ENCODE measurements at regions of chr22 and their contacts with region 1.

Region 1: DNA sequence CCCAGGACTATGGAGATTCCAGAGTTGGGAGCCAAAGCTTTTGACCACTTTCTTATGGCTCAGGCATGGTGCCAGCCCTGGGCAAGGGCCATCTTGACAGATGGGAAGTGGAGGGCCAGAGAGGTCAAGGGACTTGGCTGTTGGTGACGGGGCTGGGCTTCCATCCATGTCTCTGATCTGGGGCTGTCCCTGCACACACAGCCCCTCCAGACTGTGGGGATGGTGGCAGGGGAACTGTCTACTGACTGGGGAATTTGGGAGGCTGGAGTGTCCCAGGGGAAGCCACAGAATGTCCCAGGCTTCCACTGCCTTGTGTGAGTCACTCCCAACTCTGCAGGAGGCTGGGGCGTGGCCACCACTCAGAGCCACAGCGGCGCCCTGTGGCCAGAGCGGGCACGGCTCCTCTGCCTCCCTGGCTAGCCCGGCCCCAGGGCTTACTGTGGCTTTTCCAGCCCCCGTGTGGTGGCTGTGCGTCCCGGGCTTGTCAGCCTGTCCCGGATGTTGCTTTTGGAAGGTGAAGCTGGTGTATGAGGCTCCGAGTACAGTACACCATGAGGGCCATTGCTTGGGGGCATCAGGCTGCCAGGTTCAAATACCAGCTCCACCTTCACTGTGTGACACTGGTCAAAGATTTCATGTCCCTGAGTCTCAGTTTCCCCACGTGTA is 19.6 kb downstream of the C22orf23 start:
- DNase-seq: peak; percentile 91 to 96
- H3K4me3 ChIP-seq: no peak overlapping the region
- H3K27ac ChIP-seq: peak overlapping the region; percentile 69 to 81
- H3K4me1 ChIP-seq: peaks cover 5 to 32% (median 24%) of the 10 kb centered on the region in 4 donors
- H3K27me3 ChIP-seq: no peaks in the 10 kb centered on the region
- CTCF ChIP-seq: peak; percentile 99

Region 2: DNA sequence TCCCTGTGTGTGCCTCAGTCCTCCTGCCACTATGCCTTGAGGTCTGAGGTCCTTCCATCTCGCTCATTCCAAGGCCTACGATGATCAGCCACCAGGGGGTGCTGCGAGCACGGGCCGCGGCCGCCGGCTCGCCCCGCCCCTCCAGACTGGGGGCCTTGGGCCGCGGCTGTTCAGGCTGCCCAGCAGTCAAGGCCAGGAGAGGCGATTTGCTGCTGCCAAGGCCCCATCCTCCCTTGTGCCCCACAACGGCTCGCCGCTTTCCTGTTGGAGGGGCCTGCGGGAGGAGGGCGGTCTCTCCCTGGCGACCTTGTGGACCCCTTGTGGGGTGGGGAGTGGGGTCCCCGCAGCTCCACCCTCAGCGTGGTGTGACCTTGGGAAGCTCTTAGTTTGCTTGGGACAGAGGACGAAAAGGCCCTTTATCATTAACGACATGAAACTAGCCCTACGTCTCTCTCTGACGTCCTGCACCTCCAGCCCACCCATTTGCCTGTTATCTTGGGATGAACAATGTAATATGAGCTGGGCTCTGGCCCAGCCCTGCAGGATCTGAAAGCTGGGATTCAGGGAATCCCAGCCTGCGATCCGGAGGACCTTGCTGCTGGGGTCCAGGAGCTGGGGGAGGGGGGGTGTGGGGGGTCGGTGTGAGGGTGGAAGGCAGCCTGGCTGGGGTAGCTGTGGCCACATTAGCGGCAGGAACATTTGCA is 116.0 kb before region 1 on chr22:
- intact Hi-C with region 1: loop called (anchors 5 kb)
- DNase-seq: peak; percentile 82 to 90
- H3K4me3 ChIP-seq: peak overlapping the region; percentile 40 to 51
- H3K27ac ChIP-seq: peak overlapping the region in 1 of 2 donors; percentile 31
- H3K4me1 ChIP-seq: peaks cover 0 to 19% (median 16%) of the 10 kb centered on the region in 4 donors
- H3K27me3 ChIP-seq: peaks cover 0 to 25% of the 10 kb centered on the region in 2 donors
- CTCF ChIP-seq: peak; percentile 96 to 97

Region 3: GRCh38 chr22:37887610-37888378 is 46.0 kb before region 1 on chr22:
- intact Hi-C with region 1: loop called (anchors 5 kb)
- DNase-seq: peak in 1 of 2 donors; percentile 60
- H3K4me3 ChIP-seq: no peak overlapping the region
- H3K27ac ChIP-seq: peak overlapping the region in 1 of 2 donors; percentile 32
- H3K4me1 ChIP-seq: peaks cover 0 to 50% (median 34%) of the 10 kb centered on the region in 4 donors
- H3K27me3 ChIP-seq: no peaks in the 10 kb centered on the region
- CTCF ChIP-seq: peak; percentile 27 to 32

Region 4: DNA sequence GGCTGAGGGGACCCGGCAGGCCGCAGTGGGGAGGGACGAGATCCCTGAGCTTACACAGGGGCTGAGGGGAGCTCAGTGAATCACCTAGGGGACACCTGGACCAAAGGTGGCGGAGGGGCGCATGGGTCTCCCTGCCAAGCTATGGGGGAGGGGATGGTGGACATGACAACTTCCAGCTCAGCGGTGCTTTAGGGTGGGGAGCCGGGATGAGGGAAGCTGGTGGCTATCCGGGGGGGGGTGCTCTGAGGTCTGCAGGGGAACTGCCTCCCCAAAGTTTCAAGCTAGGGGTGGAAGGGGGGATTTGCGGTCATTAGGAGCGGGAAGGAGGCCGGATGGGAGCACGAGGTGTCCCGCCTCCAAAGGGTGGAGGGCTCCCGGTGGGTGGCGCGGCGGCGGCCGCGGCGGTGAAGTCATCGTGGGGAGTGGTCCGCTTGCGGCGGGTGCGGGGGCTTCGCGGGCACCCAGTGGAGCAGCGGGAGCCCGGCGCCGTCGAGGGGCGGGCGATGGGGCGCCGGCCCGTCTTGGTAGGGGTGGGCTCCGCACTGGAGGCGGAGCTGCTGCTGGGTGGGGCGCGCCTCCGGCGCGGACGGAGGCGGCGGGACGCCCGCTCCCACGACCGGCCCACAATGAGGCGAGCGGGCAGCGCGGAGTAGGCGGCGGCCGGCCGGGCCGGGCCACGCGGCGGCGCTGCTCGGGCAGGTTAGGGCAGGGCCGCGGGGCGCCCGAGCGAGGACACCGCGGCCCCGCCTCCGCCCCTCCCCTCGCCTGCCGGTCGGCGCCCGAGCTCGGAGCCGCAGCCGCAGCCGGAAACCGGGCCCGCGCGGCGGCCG is 28.1 kb before region 1 on chr22 and contains the start of gene MICALL1:
- intact Hi-C with region 1: loop called (anchors 2 kb)
- DNase-seq: peak; percentile 54 to 83
- H3K4me3 ChIP-seq: peak within 1 kb of the TSS; percentile 78 to 93
- H3K27ac ChIP-seq: peak within 1 kb of the TSS; percentile 91 to 94
- H3K4me1 ChIP-seq: peaks cover 0 to 49% (median 44%) of the 10 kb centered on the region in 4 donors
- H3K27me3 ChIP-seq: no peaks in the 10 kb centered on the region
- CTCF ChIP-seq: peak in 1 of 2 experiments; percentile 41

Measured in tibial artery (tissue), 4 donors.